ENCODE measurements at regions of chr20 and their contacts with region 1.

Region 1: DNA sequence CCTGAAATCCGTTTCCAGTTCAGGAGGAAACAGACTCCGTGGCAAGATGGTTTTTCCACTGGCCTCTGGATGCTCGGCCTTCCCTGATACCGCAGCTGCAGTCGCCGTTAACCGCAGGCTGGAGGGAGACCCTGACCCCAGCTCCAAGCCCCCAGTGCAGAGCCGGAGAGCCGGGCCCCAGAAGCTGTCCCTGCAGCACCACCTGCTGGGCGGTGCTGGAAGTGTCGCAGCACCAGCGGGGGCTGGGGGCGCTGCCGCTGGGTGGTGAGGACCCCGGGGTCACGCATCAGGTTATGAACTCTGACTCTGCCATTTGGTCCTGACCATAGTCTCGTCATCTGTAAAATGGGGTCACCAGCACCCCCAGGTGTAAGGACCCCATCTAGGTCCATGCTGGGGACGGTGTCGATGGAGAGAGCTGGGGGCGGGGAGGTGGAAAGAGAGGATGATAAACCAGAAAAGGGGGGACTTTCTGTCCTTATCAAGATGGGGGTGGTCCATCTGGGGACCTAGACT is 20.7 kb upstream of the CHRNA4 start:
- DNase-seq: peak; percentile 94
- H3K4me3 ChIP-seq: peak overlapping the region in 1 of 2 experiments; percentile 57; a peak in 1 of 4 replicates
- H3K27ac ChIP-seq: no peak overlapping the region
- H3K4me1 ChIP-seq: no peaks in the 10 kb centered on the region; a peak in 1 of 4 replicates
- H3K27me3 ChIP-seq: no peaks in the 10 kb centered on the region
- CTCF ChIP-seq: peak; percentile 79
- EP300 ChIP-seq: no peak
- RAD21 ChIP-seq: peak; percentile 87

Region 2: GRCh38 chr20:63290677-63291472 is 91.0 kb before region 1 on chr20:
- CTCF ChIA-PET with region 1: interaction called, 39 read pairs
- POLR2A ChIA-PET with region 1: no interaction called
- DNase-seq: peak; percentile 95
- H3K4me3 ChIP-seq: no peak overlapping the region
- H3K27ac ChIP-seq: no peak overlapping the region
- H3K4me1 ChIP-seq: no peaks in the 10 kb centered on the region; a peak in 1 of 4 replicates
- H3K27me3 ChIP-seq: peaks cover 6% of the 10 kb centered on the region; the same call in 1 of the 2 replicates
- CTCF ChIP-seq: peak; percentile 68
- EP300 ChIP-seq: no peak
- RAD21 ChIP-seq: peak; percentile 40

Region 3: GRCh38 chr20:63321136-63321831 is 60.6 kb before region 1 on chr20:
- CTCF ChIA-PET with region 1: interaction called, 53 read pairs
- POLR2A ChIA-PET with region 1: no interaction called
- DNase-seq: no peak
- H3K4me3 ChIP-seq: no peak overlapping the region
- H3K27ac ChIP-seq: no peak overlapping the region
- H3K4me1 ChIP-seq: no peaks in the 10 kb centered on the region; a peak in 1 of 4 replicates
- H3K27me3 ChIP-seq: no peaks in the 10 kb centered on the region; the same call in 1 of the 2 replicates
- CTCF ChIP-seq: no peak
- EP300 ChIP-seq: no peak
- RAD21 ChIP-seq: no peak

Region 4: DNA sequence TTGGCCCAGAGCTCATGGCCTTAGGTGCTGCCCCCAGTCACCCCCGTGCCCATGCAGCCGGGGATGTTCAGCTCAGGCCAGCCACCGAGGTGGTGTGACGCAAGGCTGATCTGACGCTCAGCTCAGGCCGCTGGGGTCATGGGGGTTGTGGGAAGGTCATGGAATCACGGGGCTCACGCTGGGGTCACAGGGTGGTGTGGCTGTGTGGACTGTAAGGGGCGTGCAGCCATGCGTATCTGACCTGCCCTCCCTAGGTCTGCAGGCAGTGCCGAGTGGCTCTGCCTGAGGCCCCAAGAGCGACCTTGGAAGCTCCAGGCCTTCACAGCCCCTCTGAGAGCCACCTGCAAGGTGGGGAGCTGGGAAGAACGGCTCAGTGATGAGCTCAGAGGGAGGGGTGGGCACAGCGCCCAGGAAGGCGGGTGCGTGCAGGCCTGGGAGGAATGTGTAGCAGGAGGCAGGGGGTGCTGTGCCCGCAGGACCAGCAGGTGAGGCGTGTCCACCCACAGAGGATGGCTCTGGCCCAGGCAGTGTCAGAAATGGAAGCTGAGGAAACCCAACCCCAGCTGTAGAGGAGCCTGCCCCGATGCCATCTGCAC is 48.5 kb before region 1 on chr20:
- CTCF ChIA-PET with region 1: interaction called, 20 read pairs
- POLR2A ChIA-PET with region 1: no interaction called
- DNase-seq: no peak
- H3K4me3 ChIP-seq: no peak overlapping the region
- H3K27ac ChIP-seq: no peak overlapping the region
- H3K4me1 ChIP-seq: peaks cover 0 to 3% of the 10 kb centered on the region in 2 experiments; a peak in 1 of 4 replicates
- H3K27me3 ChIP-seq: no peaks in the 10 kb centered on the region
- CTCF ChIP-seq: no peak
- EP300 ChIP-seq: no peak
- RAD21 ChIP-seq: no peak

Region 5: GRCh38 chr20:63351811-63352591 is 29.9 kb before region 1 on chr20:
- CTCF ChIA-PET with region 1: interaction called, 39 read pairs
- POLR2A ChIA-PET with region 1: no interaction called
- DNase-seq: peak; percentile 66
- H3K4me3 ChIP-seq: no peak overlapping the region
- H3K27ac ChIP-seq: no peak overlapping the region
- H3K4me1 ChIP-seq: no peaks in the 10 kb centered on the region; a peak in 1 of 4 replicates
- H3K27me3 ChIP-seq: no peaks in the 10 kb centered on the region
- CTCF ChIP-seq: no peak
- EP300 ChIP-seq: no peak
- RAD21 ChIP-seq: no peak

Region 6: DNA sequence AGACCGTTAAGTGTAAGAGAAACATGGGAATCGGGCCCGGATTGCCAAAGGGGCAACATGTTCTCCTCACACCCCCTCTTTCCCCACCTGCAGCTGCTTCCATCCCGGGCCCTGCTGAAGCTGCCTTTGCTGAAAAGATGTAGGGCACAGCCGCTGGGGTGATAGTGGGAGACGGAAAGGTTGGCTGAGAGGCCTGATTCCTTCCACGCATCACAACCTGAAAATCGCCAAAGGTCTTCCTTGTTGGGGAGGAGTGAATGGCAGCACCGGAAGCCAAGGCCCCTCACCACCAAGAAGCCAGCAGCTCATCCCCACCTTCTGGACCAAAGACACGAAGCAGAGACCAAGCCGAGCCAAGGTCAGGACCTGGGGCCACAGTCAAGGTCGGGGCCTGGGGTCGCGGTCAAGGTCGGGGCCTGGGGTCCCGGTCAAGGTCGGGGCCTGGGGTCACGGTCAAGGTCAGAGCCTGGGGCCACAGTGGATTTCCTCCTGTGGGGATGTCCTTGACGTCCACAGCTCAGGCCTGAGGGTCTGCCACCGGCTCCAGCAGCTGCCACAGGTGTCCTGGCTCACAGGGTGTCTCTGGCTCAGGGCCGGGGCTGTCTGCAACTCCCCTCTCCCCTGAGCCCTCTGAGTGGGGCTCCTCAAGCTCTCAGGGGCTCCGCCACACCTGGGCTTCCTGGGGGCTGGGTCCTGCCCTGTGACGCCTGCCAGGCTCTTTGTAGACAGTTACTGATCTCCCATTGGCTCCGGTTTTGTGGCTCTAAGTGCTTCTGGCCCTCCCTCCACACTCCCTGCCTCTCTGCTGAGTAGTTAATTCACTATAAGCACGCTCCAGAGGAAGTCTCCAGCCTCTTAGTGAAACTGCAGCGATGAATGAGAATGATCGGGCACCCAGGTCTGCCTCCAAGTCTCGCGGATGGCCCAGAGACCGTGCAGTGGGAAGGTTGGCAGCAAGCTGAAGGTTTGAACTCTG is 15.2 kb before region 1 on chr20:
- CTCF ChIA-PET with region 1: interaction called, 33 read pairs
- POLR2A ChIA-PET with region 1: no interaction called
- DNase-seq: no peak
- H3K4me3 ChIP-seq: no peak overlapping the region
- H3K27ac ChIP-seq: no peak overlapping the region
- H3K4me1 ChIP-seq: peaks cover 0 to 4% of the 10 kb centered on the region in 2 experiments; a peak in 1 of 4 replicates
- H3K27me3 ChIP-seq: no peaks in the 10 kb centered on the region
- CTCF ChIP-seq: no peak
- EP300 ChIP-seq: no peak
- RAD21 ChIP-seq: no peak